ENCODE measurements at regions of chr16 and their contacts with region 1.

Region 1: GRCh38 chr16:80580109-80580832 is 39.5 kb downstream of the DYNLRB2 start:
- DNase-seq: peak; percentile 11 to 68 (median 59)
- ATAC-seq: peak; percentile 91
- H3K4me3 ChIP-seq: peak overlapping the region; percentile 29
- H3K4me3 Mint-ChIP-seq: peak overlapping the region; percentile 4 to 83 (median 54)
- H3K27ac ChIP-seq: peak overlapping the region; percentile 57
- H3K27ac Mint-ChIP-seq: peak overlapping the region; percentile 78 to 99 (median 93)
- H3K4me1 ChIP-seq: peaks cover 31 to 36% of the 10 kb centered on the region in 2 donors
- H3K4me1 Mint-ChIP-seq: peaks cover 18 to 64% (median 40%) of the 10 kb centered on the region in 7 donors
- H3K27me3 ChIP-seq: no peaks in the 10 kb centered on the region
- H3K27me3 Mint-ChIP-seq: peaks cover 0 to 1% (median 0%) of the 10 kb centered on the region in 5 donors

Region 2: GRCh38 chr16:80488167-80488566 is 92.1 kb before region 1 on chr16:
- CTCF ChIA-PET with region 1: no interaction called
- POLR2A ChIA-PET with region 1: no interaction called
- intact Hi-C with region 1: no loop called
- DNase-seq: no peak
- ATAC-seq: no peak
- H3K4me3 ChIP-seq: no peak overlapping the region
- H3K4me3 Mint-ChIP-seq: no peak overlapping the region
- H3K27ac ChIP-seq: no peak overlapping the region
- H3K27ac Mint-ChIP-seq: no peak overlapping the region
- H3K4me1 ChIP-seq: no peaks in the 10 kb centered on the region
- H3K4me1 Mint-ChIP-seq: peaks cover 0 to 2% (median 0%) of the 10 kb centered on the region in 7 donors
- H3K27me3 ChIP-seq: no peaks in the 10 kb centered on the region
- H3K27me3 Mint-ChIP-seq: peaks cover 5 to 25% (median 16%) of the 10 kb centered on the region in 5 donors

Region 3: DNA sequence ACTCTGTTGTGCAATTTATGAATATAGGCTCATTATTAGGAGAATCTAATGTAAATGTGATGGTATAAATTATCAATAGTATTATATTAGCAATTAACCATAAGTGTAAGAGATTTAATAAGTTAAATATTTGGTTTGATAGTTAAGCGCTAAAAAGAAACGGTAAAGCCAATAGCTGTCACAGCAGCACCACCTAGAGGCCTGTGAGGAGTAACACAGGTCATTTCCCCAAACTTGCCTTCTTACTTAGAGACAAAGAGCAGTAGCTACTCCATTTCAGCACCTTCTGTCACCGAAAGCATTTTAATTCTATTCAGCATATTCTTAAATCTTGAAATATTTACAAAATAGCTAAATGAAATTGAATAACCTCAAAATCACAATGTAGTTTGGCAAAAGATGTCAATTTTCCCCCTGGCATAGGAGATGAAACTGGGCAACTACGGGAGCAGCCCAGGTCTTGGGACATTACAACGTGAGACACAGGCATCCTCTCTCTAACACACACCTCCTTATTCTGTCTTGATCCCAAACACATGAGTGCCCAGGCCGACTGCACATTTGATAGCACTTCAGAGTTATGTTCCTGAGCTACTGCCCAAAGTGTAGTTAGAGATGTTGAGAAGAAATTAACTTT is 53.7 kb before region 1 on chr16:
- CTCF ChIA-PET with region 1: interaction called, 11 read pairs
- POLR2A ChIA-PET with region 1: interaction called, 3 read pairs
- intact Hi-C with region 1: loop called in 1 of 2 experiments (anchors 1 kb)
- DNase-seq: peak; percentile 18 to 62 (median 51)
- ATAC-seq: peak; percentile 89
- H3K4me3 ChIP-seq: no peak overlapping the region
- H3K4me3 Mint-ChIP-seq: no peak overlapping the region
- H3K27ac ChIP-seq: no peak overlapping the region
- H3K27ac Mint-ChIP-seq: peak overlapping the region in 1 of 9 donors; percentile 4
- H3K4me1 ChIP-seq: no peaks in the 10 kb centered on the region
- H3K4me1 Mint-ChIP-seq: peaks cover 0 to 20% (median 0%) of the 10 kb centered on the region in 7 donors
- H3K27me3 ChIP-seq: no peaks in the 10 kb centered on the region
- H3K27me3 Mint-ChIP-seq: peaks cover 0 to 26% (median 0%) of the 10 kb centered on the region in 5 donors

Region 4: GRCh38 chr16:80564394-80564793 is 15.9 kb before region 1 on chr16:
- CTCF ChIA-PET with region 1: interaction called, 5 read pairs
- POLR2A ChIA-PET with region 1: interaction called, 10 read pairs
- intact Hi-C with region 1: loop called (anchors 1 kb)
- DNase-seq: peak in 6 of 9 donors; percentile 5 to 44 (median 33)
- ATAC-seq: peak; percentile 38
- H3K4me3 ChIP-seq: no peak overlapping the region
- H3K4me3 Mint-ChIP-seq: peak overlapping the region in 9 of 10 donors; percentile 31 to 74 (median 61)
- H3K27ac ChIP-seq: peak overlapping the region; percentile 11
- H3K27ac Mint-ChIP-seq: peak overlapping the region in 8 of 9 donors; percentile 60 to 92 (median 83)
- H3K4me1 ChIP-seq: peaks cover 14 to 17% of the 10 kb centered on the region in 2 donors
- H3K4me1 Mint-ChIP-seq: peaks cover 17 to 41% (median 25%) of the 10 kb centered on the region in 7 donors
- H3K27me3 ChIP-seq: no peaks in the 10 kb centered on the region
- H3K27me3 Mint-ChIP-seq: peaks cover 0 to 9% (median 0%) of the 10 kb centered on the region in 5 donors

Region 5: GRCh38 chr16:80591071-80591915 is 11.0 kb after region 1 on chr16:
- CTCF ChIA-PET with region 1: interaction called, 10 read pairs
- POLR2A ChIA-PET with region 1: interaction called, 20 read pairs
- intact Hi-C with region 1: loop called (anchors 1 kb)
- DNase-seq: peak in 8 of 9 donors; percentile 35 to 83 (median 68)
- ATAC-seq: peak; percentile 92
- H3K4me3 ChIP-seq: peak overlapping the region; percentile 42
- H3K4me3 Mint-ChIP-seq: peak overlapping the region; percentile 45 to 79 (median 64)
- H3K27ac ChIP-seq: no peak overlapping the region
- H3K27ac Mint-ChIP-seq: peak overlapping the region in 8 of 9 donors; percentile 1 to 82 (median 38)
- H3K4me1 ChIP-seq: peaks cover 10 to 19% of the 10 kb centered on the region in 2 donors
- H3K4me1 Mint-ChIP-seq: peaks cover 17 to 50% (median 29%) of the 10 kb centered on the region in 7 donors
- H3K27me3 ChIP-seq: no peaks in the 10 kb centered on the region
- H3K27me3 Mint-ChIP-seq: peaks cover 0 to 35% (median 5%) of the 10 kb centered on the region in 5 donors

Region 6: GRCh38 chr16:80733407-80733806 is 153.1 kb after region 1 on chr16:
- CTCF ChIA-PET with region 1: interaction called, 3 read pairs
- POLR2A ChIA-PET with region 1: no interaction called
- intact Hi-C with region 1: loop called in 1 of 2 experiments (anchors 5 kb)
- DNase-seq: no peak
- ATAC-seq: no peak
- H3K4me3 ChIP-seq: no peak overlapping the region
- H3K4me3 Mint-ChIP-seq: no peak overlapping the region
- H3K27ac ChIP-seq: no peak overlapping the region
- H3K27ac Mint-ChIP-seq: peak overlapping the region in 2 of 9 donors; percentile 0 to 53
- H3K4me1 ChIP-seq: no peaks in the 10 kb centered on the region
- H3K4me1 Mint-ChIP-seq: peaks cover 0 to 23% (median 4%) of the 10 kb centered on the region in 7 donors
- H3K27me3 ChIP-seq: no peaks in the 10 kb centered on the region
- H3K27me3 Mint-ChIP-seq: no peaks in the 10 kb centered on the region

Measured in naive thymus-derived CD4-positive, alpha-beta T cell (primary cell).